Activated CD8-positive, alpha-beta memory T cell treated with anti-CD3 and anti-CD28 coated beads, Interleukin-2, amount 10 ng/mL, durations not matched to agents 7 days and 5 days (primary cell): ENCODE measurements at regions of chr9 and their contacts with region 1.

Region 1: DNA sequence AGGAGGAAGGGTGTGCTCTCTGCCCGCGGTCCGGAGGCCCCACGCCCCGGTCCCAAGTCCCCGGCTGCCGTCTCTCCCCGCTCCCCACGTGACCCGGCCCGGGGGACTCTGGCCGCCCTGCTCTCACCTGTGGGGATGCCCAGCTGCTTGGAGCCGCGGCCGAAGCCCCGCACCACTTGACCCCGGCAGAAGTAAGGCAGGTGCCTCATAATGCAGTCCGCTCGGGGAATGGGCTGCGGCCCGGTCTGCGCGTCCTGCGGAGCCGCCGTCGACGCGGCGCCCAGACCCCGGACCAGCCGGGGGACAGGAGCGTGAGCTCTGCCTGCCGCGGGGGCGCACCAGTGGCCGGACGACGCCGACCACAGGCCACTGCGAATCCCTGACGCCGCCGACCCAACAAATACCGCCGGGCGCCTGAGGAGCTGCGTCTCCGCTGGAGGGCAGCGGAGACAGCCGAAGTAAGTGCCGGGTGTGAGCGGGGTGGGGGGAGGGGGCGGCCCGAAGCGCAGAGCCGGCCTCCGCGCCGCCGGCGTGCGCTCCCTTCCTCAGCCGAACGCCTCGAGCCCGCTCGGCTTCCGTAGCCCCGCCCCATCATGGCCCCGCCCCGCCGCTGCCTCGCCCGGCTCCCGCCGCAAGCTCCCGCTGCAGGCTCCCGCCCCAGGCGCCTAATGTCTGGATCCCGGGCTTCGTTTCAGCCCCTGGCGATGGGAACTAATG is at the start of gene RFK:
- DNase-seq: peak; percentile 91
- ATAC-seq: peak; percentile 92
- H3K4me3 Mint-ChIP-seq: peak within 1 kb of the TSS; percentile 94
- H3K27ac Mint-ChIP-seq: peak within 1 kb of the TSS; percentile 98
- H3K4me1 Mint-ChIP-seq: peaks cover 34% of the 10 kb centered on the region
- H3K27me3 Mint-ChIP-seq: no peaks in the 10 kb centered on the region
- total RNA-seq, gene RFK: 17.0 to 19.0 TPM

Region 2: GRCh38 chr9:76379512-76379911 is 14.6 kb before region 1 on chr9:
- CTCF ChIA-PET with region 1: interaction called, 10 read pairs
- DNase-seq: no peak
- ATAC-seq: no peak
- H3K4me3 Mint-ChIP-seq: no peak overlapping the region
- H3K27ac Mint-ChIP-seq: no peak overlapping the region
- H3K4me1 Mint-ChIP-seq: no peaks in the 10 kb centered on the region
- H3K27me3 Mint-ChIP-seq: no peaks in the 10 kb centered on the region

Region 3: DNA sequence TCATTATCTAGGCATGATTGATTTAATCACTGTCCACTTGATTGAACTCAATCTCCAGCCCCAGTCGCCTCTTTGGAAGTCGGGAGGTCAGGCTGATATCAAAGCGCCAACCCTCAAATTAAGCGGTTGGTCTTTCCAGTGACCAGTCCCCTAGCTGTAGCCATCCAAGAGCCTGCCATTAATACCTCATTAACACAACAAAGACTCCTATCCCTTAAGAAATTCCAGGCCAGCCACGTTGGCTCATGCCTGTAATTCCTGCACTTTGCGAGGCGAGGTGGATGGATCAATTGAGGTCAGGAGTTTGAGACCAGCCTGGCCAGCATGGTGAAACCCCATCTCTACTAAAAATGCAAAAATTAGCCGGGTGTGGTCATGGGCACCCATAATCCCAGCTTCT is 37.5 kb after region 1 on chr9:
- CTCF ChIA-PET with region 1: no interaction called
- DNase-seq: no peak
- ATAC-seq: no peak
- H3K4me3 Mint-ChIP-seq: no peak overlapping the region
- H3K27ac Mint-ChIP-seq: no peak overlapping the region
- H3K4me1 Mint-ChIP-seq: peaks cover 9% of the 10 kb centered on the region
- H3K27me3 Mint-ChIP-seq: no peaks in the 10 kb centered on the region

Region 4: GRCh38 chr9:76441551-76442322 is 47.6 kb after region 1 on chr9:
- CTCF ChIA-PET with region 1: interaction called, 10 read pairs
- DNase-seq: peak; percentile 74
- ATAC-seq: peak; percentile 87
- H3K4me3 Mint-ChIP-seq: peak overlapping the region; percentile 65
- H3K27ac Mint-ChIP-seq: peak overlapping the region; percentile 84
- H3K4me1 Mint-ChIP-seq: peaks cover 70% of the 10 kb centered on the region
- H3K27me3 Mint-ChIP-seq: no peaks in the 10 kb centered on the region